CD4-positive, alpha-beta T cell (primary cell): ENCODE measurements at regions of chr10 and their contacts with region 1.

Region 1: DNA sequence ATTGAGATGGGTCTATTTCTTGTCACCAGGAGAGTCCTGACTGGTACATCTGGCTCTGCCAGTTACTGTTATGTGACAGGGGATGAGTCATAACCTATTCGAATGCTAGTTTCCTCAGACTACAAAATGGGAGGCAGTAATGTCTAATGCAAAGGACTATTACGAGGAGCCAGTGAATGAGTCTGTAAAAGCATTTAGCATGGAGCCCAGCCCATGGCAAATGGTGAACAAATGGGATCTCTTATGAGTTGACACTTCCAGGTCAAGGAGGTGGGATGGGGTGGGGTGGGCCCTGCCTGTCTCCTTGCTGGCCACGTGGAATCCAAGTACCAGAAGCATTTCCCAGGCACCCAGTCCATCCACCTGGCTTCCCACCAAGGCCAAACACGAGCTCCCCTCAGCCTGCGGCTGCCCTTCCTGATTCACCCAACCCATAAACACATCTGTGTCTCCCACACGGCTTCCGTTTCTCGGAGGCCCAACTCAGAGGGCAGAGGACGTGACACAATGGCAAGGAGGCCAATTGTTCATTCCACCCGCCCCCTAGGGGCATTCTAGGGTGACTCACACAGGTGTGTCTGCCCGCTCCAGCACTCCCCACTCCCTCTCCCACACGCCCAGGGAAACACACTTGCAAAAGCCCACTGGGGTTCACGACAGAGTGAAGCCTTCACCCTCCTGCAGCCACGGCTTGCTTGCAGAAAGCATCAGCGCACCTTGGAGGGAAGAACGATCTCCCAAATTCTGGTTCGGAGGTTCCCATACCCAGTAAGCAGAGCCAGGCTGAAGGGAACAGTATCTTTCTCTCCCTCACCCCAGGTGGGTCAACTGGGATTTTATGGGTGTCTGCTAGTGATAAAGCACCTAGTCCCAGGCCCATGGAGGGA is 109.8 kb downstream of the SH3PXD2A start:
- DNase-seq: peak in 13 of 14 experiments; percentile 15 to 73 (median 46)
- ATAC-seq: peak; percentile 71
- H3K4me3 ChIP-seq: no peak overlapping the region
- H3K4me3 Mint-ChIP-seq: peak overlapping the region; percentile 42
- H3K27ac ChIP-seq: peak overlapping the region in 1 of 2 donors; percentile 31
- H3K27ac Mint-ChIP-seq: peak overlapping the region; percentile 78
- H3K4me1 ChIP-seq: peaks cover 43% of the 10 kb centered on the region
- H3K4me1 Mint-ChIP-seq: peaks cover 38% of the 10 kb centered on the region
- H3K27me3 ChIP-seq: no peaks in the 10 kb centered on the region
- H3K27me3 Mint-ChIP-seq: no peaks in the 10 kb centered on the region
- CTCF ChIP-seq: no peak

Region 2: DNA sequence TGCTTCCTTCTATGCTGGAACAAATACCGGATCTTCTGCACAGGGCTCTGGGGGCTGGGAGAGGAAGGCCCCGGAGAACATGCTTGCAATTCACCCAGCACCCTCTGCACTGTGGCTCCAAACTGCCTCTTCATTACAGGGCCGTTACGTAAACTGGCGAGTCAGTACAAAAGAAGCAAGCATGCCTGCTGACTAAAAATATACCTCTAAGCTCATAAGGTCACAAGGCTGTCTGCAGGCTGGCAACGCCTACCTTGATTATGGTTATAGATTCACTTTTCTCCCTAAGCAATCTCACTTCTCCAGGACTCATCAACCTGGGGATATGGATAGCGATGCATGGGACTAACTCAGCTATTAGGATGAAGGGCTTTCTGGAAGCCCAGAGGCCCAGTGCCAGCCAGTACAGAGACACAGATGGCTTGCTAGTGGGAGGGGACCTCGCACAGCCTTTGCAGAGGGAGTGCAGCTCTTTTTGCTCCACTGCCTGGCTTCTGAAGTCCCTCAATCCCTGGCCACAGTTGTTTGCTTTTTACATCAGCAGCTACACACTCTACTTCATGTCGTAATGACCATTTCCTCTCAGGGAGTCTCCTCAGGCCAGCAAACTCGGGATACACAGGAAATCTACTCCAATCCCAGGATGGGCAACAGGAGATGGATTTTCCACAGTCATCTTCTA is 13.7 kb after region 1 on chr10:
- CTCF ChIA-PET with region 1: interaction called, 3 read pairs
- POLR2A ChIA-PET with region 1: interaction called, 10 read pairs
- intact Hi-C with region 1: no loop called
- DNase-seq: peak in 5 of 14 experiments; percentile 16 to 47 (median 39)
- ATAC-seq: peak; percentile 76
- H3K4me3 ChIP-seq: no peak overlapping the region
- H3K4me3 Mint-ChIP-seq: peak overlapping the region; percentile 25
- H3K27ac ChIP-seq: peak overlapping the region in 1 of 2 donors; percentile 19
- H3K27ac Mint-ChIP-seq: peak overlapping the region; percentile 72
- H3K4me1 ChIP-seq: peaks cover 63% of the 10 kb centered on the region
- H3K4me1 Mint-ChIP-seq: peaks cover 66% of the 10 kb centered on the region
- H3K27me3 ChIP-seq: no peaks in the 10 kb centered on the region
- H3K27me3 Mint-ChIP-seq: no peaks in the 10 kb centered on the region
- CTCF ChIP-seq: no peak

Region 3: GRCh38 chr10:103789771-103790201 is 44.2 kb after region 1 on chr10:
- CTCF ChIA-PET with region 1: no interaction called
- POLR2A ChIA-PET with region 1: no interaction called
- intact Hi-C with region 1: loop called in 1 of 2 experiments (anchors 5 kb)
- DNase-seq: peak in 1 of 14 experiments; percentile 32
- ATAC-seq: peak; percentile 68
- H3K4me3 ChIP-seq: no peak overlapping the region
- H3K4me3 Mint-ChIP-seq: no peak overlapping the region
- H3K27ac ChIP-seq: no peak overlapping the region
- H3K27ac Mint-ChIP-seq: no peak overlapping the region
- H3K4me1 ChIP-seq: peaks cover 11% of the 10 kb centered on the region
- H3K4me1 Mint-ChIP-seq: peaks cover 8% of the 10 kb centered on the region
- H3K27me3 ChIP-seq: no peaks in the 10 kb centered on the region
- H3K27me3 Mint-ChIP-seq: no peaks in the 10 kb centered on the region
- CTCF ChIP-seq: no peak